Right cardiac atrium (tissue), 5 donors: ENCODE measurements at regions of chr20 and their contacts with region 1.

Region 1: GRCh38 chr20:36872852-36873251 is 3.1 kb upstream of the TLDC2 start:
- DNase-seq: peak in 1 of 3 donors; percentile 69
- ATAC-seq: peak in 1 of 2 donors; percentile 44
- H3K4me3 ChIP-seq: no peak overlapping the region
- H3K27ac ChIP-seq: no peak overlapping the region
- H3K4me1 ChIP-seq: no peaks in the 10 kb centered on the region
- H3K27me3 ChIP-seq: no peaks in the 10 kb centered on the region

Region 2: DNA sequence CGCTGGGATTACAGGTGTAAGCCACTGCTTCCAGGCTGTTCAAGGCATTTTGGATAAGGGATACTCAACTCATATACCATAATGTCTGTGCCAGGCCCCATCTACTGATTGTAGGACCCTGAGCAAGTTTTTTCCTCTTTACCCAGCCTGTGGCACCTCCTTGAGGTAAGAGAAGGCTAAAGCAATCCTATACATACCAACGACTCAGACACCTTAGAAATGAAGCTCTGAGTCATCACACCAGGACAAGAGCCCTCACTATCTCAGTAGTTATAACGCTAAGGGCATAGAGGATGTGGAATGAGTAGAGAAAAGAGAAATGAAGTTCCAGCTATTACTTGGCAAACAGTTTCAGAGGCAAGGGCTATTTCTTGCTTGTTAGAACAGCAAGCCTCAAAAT is 143.9 kb before region 1 on chr20:
- intact Hi-C with region 1: no loop called
- DNase-seq: no peak
- ATAC-seq: no peak
- H3K4me3 ChIP-seq: no peak overlapping the region
- H3K27ac ChIP-seq: no peak overlapping the region
- H3K4me1 ChIP-seq: peaks cover 7% of the 10 kb centered on the region
- H3K27me3 ChIP-seq: no peaks in the 10 kb centered on the region

Region 3: DNA sequence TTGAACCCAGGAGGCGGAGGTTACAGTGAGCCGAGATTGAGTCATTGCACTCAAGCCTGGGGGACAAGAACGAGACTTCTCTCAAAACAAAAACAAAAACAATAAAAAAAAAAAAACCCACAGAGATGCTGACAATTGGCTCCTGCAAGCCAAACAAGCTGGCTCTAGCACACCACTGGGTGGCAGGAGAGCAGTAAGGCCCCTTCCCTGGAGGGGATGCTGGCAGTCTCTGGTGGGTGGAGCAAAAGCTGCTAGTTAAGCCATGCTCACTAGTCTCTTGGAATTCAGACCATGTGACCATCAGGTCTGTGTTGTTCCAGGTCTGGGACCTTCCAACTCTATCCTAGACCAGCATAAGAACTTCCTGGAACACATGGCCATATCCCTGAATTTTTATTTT is 80.4 kb before region 1 on chr20:
- intact Hi-C with region 1: loop called in 1 of 4 experiments (anchors 10 kb)
- DNase-seq: peak; percentile 41 to 74 (median 72)
- ATAC-seq: peak; percentile 50 to 51
- H3K4me3 ChIP-seq: no peak overlapping the region
- H3K27ac ChIP-seq: no peak overlapping the region
- H3K4me1 ChIP-seq: no peaks in the 10 kb centered on the region
- H3K27me3 ChIP-seq: no peaks in the 10 kb centered on the region

Region 4: GRCh38 chr20:37011147-37011546 is 138.3 kb after region 1 on chr20:
- intact Hi-C with region 1: no loop called
- DNase-seq: no peak
- ATAC-seq: no peak
- H3K4me3 ChIP-seq: no peak overlapping the region
- H3K27ac ChIP-seq: no peak overlapping the region
- H3K4me1 ChIP-seq: no peaks in the 10 kb centered on the region
- H3K27me3 ChIP-seq: no peaks in the 10 kb centered on the region